CD14-positive monocyte (primary cell): ENCODE measurements at regions of chr20 and their contacts with region 1.

Region 1: DNA sequence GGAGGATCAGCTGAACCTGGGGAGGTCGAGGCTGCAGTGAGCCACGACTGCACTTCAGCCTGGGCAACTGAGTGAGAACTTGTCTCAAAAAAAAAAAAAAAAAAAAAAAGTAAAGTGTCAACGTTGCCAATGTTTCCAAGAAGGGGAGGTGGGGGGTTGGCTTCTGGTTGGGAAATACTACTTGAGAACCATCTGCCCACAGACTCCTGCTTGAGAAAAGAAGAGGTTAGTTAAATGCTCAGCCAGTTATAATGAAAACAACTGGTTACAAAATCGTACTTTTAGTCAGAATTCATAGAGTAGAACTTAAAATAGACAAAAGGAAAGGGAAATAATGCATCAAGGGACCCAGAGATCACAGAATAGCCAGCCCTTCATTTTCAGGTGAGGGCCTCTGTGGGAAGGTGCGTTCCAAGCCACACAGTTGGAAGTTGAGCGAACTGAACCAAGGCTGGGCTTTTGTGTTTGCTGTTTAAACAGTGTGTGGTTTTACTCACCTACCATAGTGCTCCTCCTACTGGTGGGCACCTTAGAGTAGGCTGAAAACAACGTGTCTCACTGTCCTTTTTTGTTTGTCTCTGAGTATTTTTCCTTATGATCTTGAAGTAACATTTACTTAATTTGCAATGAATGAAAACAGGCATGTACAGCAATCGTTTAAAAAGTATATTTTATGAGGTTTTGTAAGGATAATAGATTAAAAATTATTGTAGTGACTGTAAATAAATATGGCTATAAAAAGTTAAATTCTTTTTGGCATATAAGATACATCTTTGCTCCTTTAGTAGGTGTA is 200.7 kb downstream of the BCAS1 start:
- DNase-seq: peak; percentile 62 to 74 (median 70)
- H3K4me3 ChIP-seq: peak overlapping the region in 2 of 3 experiments; percentile 18 to 67
- H3K4me3 Mint-ChIP-seq: peak overlapping the region; percentile 41 to 46
- H3K27ac ChIP-seq: peak overlapping the region in 1 of 2 donors; percentile 80
- H3K27ac Mint-ChIP-seq: peak overlapping the region; percentile 40 to 87 (median 62)
- H3K4me1 ChIP-seq: peaks cover 30 to 49% of the 10 kb centered on the region in 2 donors
- H3K4me1 Mint-ChIP-seq: peaks cover 46% of the 10 kb centered on the region
- H3K27me3 ChIP-seq: no peaks in the 10 kb centered on the region
- H3K27me3 Mint-ChIP-seq: peaks cover 0 to 2% (median 0%) of the 10 kb centered on the region in 3 donors
- CTCF ChIP-seq: peak; percentile 81

Region 2: DNA sequence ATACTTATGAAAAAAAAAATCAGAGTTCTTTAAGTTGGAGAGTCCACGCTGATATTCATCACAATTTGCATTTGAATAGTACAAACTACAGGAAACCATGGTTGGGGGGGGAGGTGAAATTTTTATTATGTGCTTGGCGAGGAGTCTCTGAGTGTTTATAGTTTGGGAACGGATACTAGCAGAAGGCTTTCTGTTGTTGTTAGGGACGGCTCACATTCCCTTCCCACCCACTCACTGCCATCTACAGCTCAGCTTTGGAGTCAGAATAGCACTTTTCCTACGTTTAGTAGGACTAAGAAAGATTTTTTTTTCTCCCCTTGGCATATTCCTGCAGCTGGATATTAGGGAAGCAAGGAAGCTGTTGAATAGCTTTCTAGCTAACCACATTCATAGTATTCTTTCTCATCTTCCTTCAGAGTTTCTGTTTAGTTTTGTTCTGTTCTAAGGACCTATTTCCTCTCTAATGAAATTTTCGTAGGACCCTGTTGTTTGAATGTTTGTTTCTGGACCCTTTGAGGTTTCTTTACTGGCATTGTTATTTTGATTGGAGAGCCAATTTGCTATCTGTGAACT is 40.9 kb before region 1 on chr20:
- intact Hi-C with region 1: loop called in 1 of 2 experiments (anchors 5 kb)
- DNase-seq: peak in 1 of 3 donors; percentile 12
- H3K4me3 ChIP-seq: peak overlapping the region; percentile 19 to 70 (median 47)
- H3K4me3 Mint-ChIP-seq: peak overlapping the region; percentile 56 to 88
- H3K27ac ChIP-seq: peak overlapping the region; percentile 32 to 92
- H3K27ac Mint-ChIP-seq: peak overlapping the region; percentile 1 to 94 (median 85)
- H3K4me1 ChIP-seq: peaks cover 40 to 52% of the 10 kb centered on the region in 2 donors
- H3K4me1 Mint-ChIP-seq: peaks cover 52% of the 10 kb centered on the region
- H3K27me3 ChIP-seq: no peaks in the 10 kb centered on the region
- H3K27me3 Mint-ChIP-seq: peaks cover 0 to 3% (median 1%) of the 10 kb centered on the region in 3 donors
- CTCF ChIP-seq: no peak

Region 3: DNA sequence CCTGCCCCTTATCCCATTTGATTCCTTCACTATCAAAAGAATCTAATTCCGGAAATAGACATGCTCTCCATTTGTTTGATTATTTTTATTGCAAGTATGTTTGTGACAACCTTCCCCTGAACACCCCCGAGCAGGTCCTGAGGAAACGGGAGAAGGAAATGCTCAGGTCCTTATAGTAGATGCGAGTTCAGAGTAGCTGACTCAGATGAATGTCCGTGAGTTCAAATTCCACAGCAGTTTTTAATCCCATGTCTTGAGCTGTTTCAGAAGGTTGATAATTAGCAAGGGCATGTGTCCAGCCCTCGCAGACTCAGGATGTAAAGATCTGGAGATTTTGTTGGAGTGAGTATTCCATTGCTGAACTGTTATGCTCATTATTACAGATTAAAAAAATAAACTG is 31.4 kb after region 1 on chr20:
- intact Hi-C with region 1: no loop called
- DNase-seq: no peak
- H3K4me3 ChIP-seq: no peak overlapping the region
- H3K4me3 Mint-ChIP-seq: no peak overlapping the region
- H3K27ac ChIP-seq: no peak overlapping the region
- H3K27ac Mint-ChIP-seq: peak overlapping the region in 2 of 7 donors; percentile 13 to 47
- H3K4me1 ChIP-seq: peaks cover 59 to 63% of the 10 kb centered on the region in 2 donors
- H3K4me1 Mint-ChIP-seq: peaks cover 55% of the 10 kb centered on the region
- H3K27me3 ChIP-seq: no peaks in the 10 kb centered on the region
- H3K27me3 Mint-ChIP-seq: peaks cover 2 to 4% (median 4%) of the 10 kb centered on the region in 3 donors
- CTCF ChIP-seq: no peak

Region 4: DNA sequence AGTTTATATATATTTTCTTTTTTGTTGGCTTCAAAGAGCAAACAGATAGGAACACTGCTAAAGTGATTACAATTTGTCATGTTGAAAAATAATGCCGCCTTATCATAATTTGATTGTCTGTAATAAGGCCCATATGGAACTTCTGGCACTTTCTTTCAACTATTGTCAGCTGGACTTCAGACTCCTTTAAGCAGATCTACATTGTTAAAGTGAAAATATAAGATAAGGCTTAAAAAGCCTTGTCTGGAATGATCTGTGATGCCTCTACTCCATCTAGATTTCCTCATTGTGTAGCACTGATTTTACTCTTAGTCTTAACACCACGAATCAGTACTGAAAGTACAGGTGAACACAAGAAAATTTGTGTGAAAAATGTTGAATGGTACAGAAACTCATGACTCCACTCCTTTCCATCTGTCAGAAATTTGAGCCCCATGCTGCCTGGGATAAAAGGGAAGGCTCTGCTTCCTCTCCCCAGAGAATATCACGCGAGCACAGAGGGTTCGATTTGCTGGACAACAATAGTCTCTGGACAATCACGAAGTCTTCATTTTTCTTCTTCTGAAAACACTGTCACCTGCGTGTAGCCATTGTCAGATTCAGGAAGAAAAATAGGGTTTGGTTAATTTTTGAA is 144.7 kb after region 1 on chr20:
- intact Hi-C with region 1: no loop called
- DNase-seq: no peak
- H3K4me3 ChIP-seq: no peak overlapping the region
- H3K4me3 Mint-ChIP-seq: no peak overlapping the region
- H3K27ac ChIP-seq: no peak overlapping the region
- H3K27ac Mint-ChIP-seq: no peak overlapping the region
- H3K4me1 ChIP-seq: peaks cover 22 to 26% of the 10 kb centered on the region in 2 donors
- H3K4me1 Mint-ChIP-seq: peaks cover 27% of the 10 kb centered on the region
- H3K27me3 ChIP-seq: no peaks in the 10 kb centered on the region
- H3K27me3 Mint-ChIP-seq: peaks cover 0 to 4% (median 2%) of the 10 kb centered on the region in 3 donors
- CTCF ChIP-seq: no peak